Activated B cell treated with CpG ODN at 0.5 μM for 24 hours (primary cell): ENCODE measurements at regions of chr10 and their contacts with region 1.

Region 1: GRCh38 chr10:74977913-74978847 is 133.3 kb upstream of the SAMD8 start:
- DNase-seq: no peak
- ATAC-seq: peak; percentile 83
- H3K4me3 Mint-ChIP-seq: peak overlapping the region; percentile 72
- H3K27ac Mint-ChIP-seq: peak overlapping the region; percentile 84
- H3K4me1 Mint-ChIP-seq: peaks cover 62% of the 10 kb centered on the region
- H3K27me3 Mint-ChIP-seq: no peaks in the 10 kb centered on the region
- CTCF ChIP-seq: no peak

Region 2: GRCh38 chr10:74598891-74599566 is 379.2 kb before region 1 on chr10:
- CTCF ChIA-PET with region 1: no interaction called
- POLR2A ChIA-PET with region 1: interaction called, 13 read pairs
- intact Hi-C with region 1: no loop called
- DNase-seq: no peak
- ATAC-seq: no peak
- H3K4me3 Mint-ChIP-seq: no peak overlapping the region
- H3K27ac Mint-ChIP-seq: no peak overlapping the region
- H3K4me1 Mint-ChIP-seq: no peaks in the 10 kb centered on the region
- H3K27me3 Mint-ChIP-seq: no peaks in the 10 kb centered on the region
- CTCF ChIP-seq: no peak

Region 3: DNA sequence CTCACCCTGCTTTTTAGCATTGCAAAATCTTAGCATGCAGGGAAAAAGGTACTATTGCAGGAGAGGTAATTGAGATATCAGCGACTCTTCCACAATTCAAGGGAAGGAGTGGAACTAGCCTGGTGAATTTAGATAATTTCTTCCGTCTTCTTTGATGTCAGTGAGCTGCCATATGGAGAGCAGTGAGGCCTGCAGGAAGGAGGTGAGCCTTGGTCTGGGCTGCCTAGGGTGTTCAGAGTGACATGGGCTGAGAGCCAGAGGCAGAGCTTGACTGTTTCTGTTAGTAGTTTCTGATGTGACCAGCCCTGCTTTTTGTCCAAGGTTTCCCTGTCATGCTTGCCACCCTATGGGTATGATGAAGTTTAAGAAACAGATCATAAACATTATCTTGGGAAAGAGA is 123.2 kb before region 1 on chr10:
- CTCF ChIA-PET with region 1: no interaction called
- POLR2A ChIA-PET with region 1: interaction called, 4 read pairs
- intact Hi-C with region 1: loop called (anchors 1 kb)
- DNase-seq: no peak
- ATAC-seq: peak; percentile 55
- H3K4me3 Mint-ChIP-seq: peak overlapping the region; percentile 45
- H3K27ac Mint-ChIP-seq: peak overlapping the region; percentile 85
- H3K4me1 Mint-ChIP-seq: peaks cover 46% of the 10 kb centered on the region
- H3K27me3 Mint-ChIP-seq: no peaks in the 10 kb centered on the region
- CTCF ChIP-seq: no peak

Region 4: DNA sequence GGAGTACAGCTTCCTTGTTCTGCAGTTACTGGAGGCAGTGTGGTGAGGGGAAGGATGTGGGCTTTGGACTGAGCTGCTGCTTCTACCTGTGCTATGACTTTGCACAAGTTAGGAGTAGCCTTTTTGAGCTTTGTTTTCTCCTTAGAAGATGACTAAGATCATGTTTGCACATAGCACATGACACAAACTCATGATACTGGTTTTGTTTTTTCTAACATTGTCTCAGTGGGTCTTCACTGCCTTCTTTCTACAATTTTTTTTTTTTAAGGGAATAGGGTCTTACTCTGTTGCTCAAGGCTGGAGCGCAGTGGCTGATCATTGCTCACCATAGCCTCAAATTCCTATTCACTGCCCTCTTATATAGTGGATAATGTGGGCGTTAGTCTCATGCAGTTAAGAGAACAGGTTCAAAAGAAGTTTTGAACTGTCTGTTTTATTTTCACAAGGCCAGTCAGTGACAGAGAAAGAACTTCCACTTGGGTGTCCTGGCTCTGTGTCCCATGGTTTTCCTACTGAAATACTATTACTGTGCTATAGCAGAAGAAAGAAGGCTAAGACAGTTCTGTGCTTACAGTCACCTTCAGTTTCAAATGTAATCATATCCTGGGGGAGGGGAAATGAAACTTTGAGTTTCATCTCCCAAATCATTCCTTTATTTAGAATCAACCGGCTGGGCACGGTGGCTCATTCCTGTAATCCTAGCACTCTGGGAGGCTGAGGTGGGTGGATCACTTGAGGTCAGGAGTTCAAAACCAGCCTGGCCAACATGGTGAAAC is 79.8 kb before region 1 on chr10:
- CTCF ChIA-PET with region 1: no interaction called
- POLR2A ChIA-PET with region 1: no interaction called
- intact Hi-C with region 1: loop called (anchors 5 kb)
- DNase-seq: no peak
- ATAC-seq: no peak
- H3K4me3 Mint-ChIP-seq: peak overlapping the region; percentile 19
- H3K27ac Mint-ChIP-seq: no peak overlapping the region
- H3K4me1 Mint-ChIP-seq: peaks cover 60% of the 10 kb centered on the region
- H3K27me3 Mint-ChIP-seq: no peaks in the 10 kb centered on the region
- CTCF ChIP-seq: no peak

Region 5: GRCh38 chr10:74963549-74963948 is 14.6 kb before region 1 on chr10:
- CTCF ChIA-PET with region 1: no interaction called
- POLR2A ChIA-PET with region 1: no interaction called
- intact Hi-C with region 1: no loop called
- DNase-seq: no peak
- ATAC-seq: peak; percentile 25
- H3K4me3 Mint-ChIP-seq: no peak overlapping the region
- H3K27ac Mint-ChIP-seq: no peak overlapping the region
- H3K4me1 Mint-ChIP-seq: peaks cover 24% of the 10 kb centered on the region
- H3K27me3 Mint-ChIP-seq: no peaks in the 10 kb centered on the region
- CTCF ChIP-seq: no peak

Region 6: GRCh38 chr10:75000748-75001321 is 22.7 kb after region 1 on chr10:
- CTCF ChIA-PET with region 1: interaction called, 3 read pairs
- POLR2A ChIA-PET with region 1: interaction called, 13 read pairs
- intact Hi-C with region 1: loop called (anchors 1 kb)
- DNase-seq: no peak
- ATAC-seq: peak; percentile 85
- H3K4me3 Mint-ChIP-seq: peak overlapping the region; percentile 76
- H3K27ac Mint-ChIP-seq: peak overlapping the region; percentile 93
- H3K4me1 Mint-ChIP-seq: peaks cover 32% of the 10 kb centered on the region
- H3K27me3 Mint-ChIP-seq: no peaks in the 10 kb centered on the region
- CTCF ChIP-seq: no peak

Region 7: GRCh38 chr10:75012471-75012870 is 34.3 kb after region 1 on chr10:
- CTCF ChIA-PET with region 1: no interaction called
- POLR2A ChIA-PET with region 1: no interaction called
- intact Hi-C with region 1: loop called (anchors 1 kb)
- DNase-seq: no peak
- ATAC-seq: peak; percentile 49
- H3K4me3 Mint-ChIP-seq: peak overlapping the region; percentile 33
- H3K27ac Mint-ChIP-seq: peak overlapping the region; percentile 74
- H3K4me1 Mint-ChIP-seq: peaks cover 56% of the 10 kb centered on the region
- H3K27me3 Mint-ChIP-seq: no peaks in the 10 kb centered on the region
- CTCF ChIP-seq: no peak